ENCODE measurements at regions of chr16 and their contacts with region 1.

Region 1: GRCh38 chr16:1964506-1965395 is at the start of gene RPS2:
- DNase-seq: peak; percentile 94 to 99
- H3K4me3 ChIP-seq: peak within 1 kb of the TSS; percentile 83
- H3K27ac ChIP-seq: peak within 1 kb of the TSS; percentile 94
- H3K4me1 ChIP-seq: peaks cover 12% of the 10 kb centered on the region; the same call in 1 of the 2 replicates
- H3K27me3 ChIP-seq: no peaks in the 10 kb centered on the region
- CTCF ChIP-seq: no peak
- total RNA-seq, gene RPS2: 3,808 and 4,468 TPM in 2 replicates

Region 2: GRCh38 chr16:168424-168823 is 1796.3 kb before region 1 on chr16:
- CTCF ChIA-PET with region 1: no interaction called
- POLR2A ChIA-PET with region 1: no interaction called
- intact Hi-C with region 1: no loop called
- DNase-seq: no peak
- H3K4me3 ChIP-seq: no peak overlapping the region
- H3K27ac ChIP-seq: no peak overlapping the region
- H3K4me1 ChIP-seq: no peaks in the 10 kb centered on the region
- H3K27me3 ChIP-seq: peaks cover 10% of the 10 kb centered on the region; the same call in 1 of the 2 replicates
- CTCF ChIP-seq: no peak

Region 3: GRCh38 chr16:1752853-1753252 is 211.9 kb before region 1 on chr16:
- CTCF ChIA-PET with region 1: no interaction called
- POLR2A ChIA-PET with region 1: no interaction called
- intact Hi-C with region 1: no loop called
- DNase-seq: no peak
- H3K4me3 ChIP-seq: no peak overlapping the region
- H3K27ac ChIP-seq: no peak overlapping the region
- H3K4me1 ChIP-seq: peaks cover 3% of the 10 kb centered on the region; the same call in 1 of the 2 replicates
- H3K27me3 ChIP-seq: no peaks in the 10 kb centered on the region
- CTCF ChIP-seq: no peak

Region 4: GRCh38 chr16:1772736-1773584 is 191.8 kb before region 1 on chr16 and contains the starts of genes EME2 and MRPS34:
- CTCF ChIA-PET with region 1: no interaction called
- POLR2A ChIA-PET with region 1: no interaction called
- intact Hi-C with region 1: loop called (anchors 5 kb)
- DNase-seq: peak; percentile 69 to 93
- H3K4me3 ChIP-seq: peak within 1 kb of the TSS; percentile 77
- H3K27ac ChIP-seq: peak within 1 kb of the TSS; percentile 77
- H3K4me1 ChIP-seq: peaks cover 19% of the 10 kb centered on the region
- H3K27me3 ChIP-seq: no peaks in the 10 kb centered on the region
- CTCF ChIP-seq: peak; percentile 90
- total RNA-seq, gene EME2: 24.2 and 32.4 TPM in 2 replicates
- total RNA-seq, gene MRPS34: 201 and 247 TPM in 2 replicates

Region 5: GRCh38 chr16:1863681-1864460 is 100.9 kb before region 1 on chr16:
- CTCF ChIA-PET with region 1: no interaction called
- POLR2A ChIA-PET with region 1: interaction called, 30 read pairs
- intact Hi-C with region 1: no loop called
- DNase-seq: peak in 1 of 2 experiments; percentile 11
- H3K4me3 ChIP-seq: no peak overlapping the region
- H3K27ac ChIP-seq: no peak overlapping the region
- H3K4me1 ChIP-seq: 0 out of 2 replicates have a peak, but pooled peaks cover under 1% of the 10 kb centered on the region
- H3K27me3 ChIP-seq: peaks cover 2% of the 10 kb centered on the region; the same call in 1 of the 2 replicates
- CTCF ChIP-seq: peak; percentile 80

Region 6: GRCh38 chr16:1983544-1984346 is 19.0 kb after region 1 on chr16 and contains the start of gene GFER:
- CTCF ChIA-PET with region 1: no interaction called
- POLR2A ChIA-PET with region 1: interaction called, 10 read pairs
- intact Hi-C with region 1: no loop called
- DNase-seq: peak; percentile 73 to 98
- H3K4me3 ChIP-seq: peak within 1 kb of the TSS; percentile 93
- H3K27ac ChIP-seq: no peak within 1 kb of the TSS
- H3K4me1 ChIP-seq: peaks cover 67% of the 10 kb centered on the region
- H3K27me3 ChIP-seq: no peaks in the 10 kb centered on the region
- CTCF ChIP-seq: no peak; the same call in 1 of the 2 replicates
- total RNA-seq, gene GFER: 59.7 and 63.8 TPM in 2 replicates

Region 7: GRCh38 chr16:2371421-2371820 is 406.7 kb after region 1 on chr16:
- CTCF ChIA-PET with region 1: no interaction called
- POLR2A ChIA-PET with region 1: no interaction called
- intact Hi-C with region 1: no loop called
- DNase-seq: no peak
- H3K4me3 ChIP-seq: no peak overlapping the region
- H3K27ac ChIP-seq: no peak overlapping the region
- H3K4me1 ChIP-seq: peaks cover 7% of the 10 kb centered on the region; the same call in 1 of the 2 replicates
- H3K27me3 ChIP-seq: peaks cover 25% of the 10 kb centered on the region
- CTCF ChIP-seq: no peak

Region 8: DNA sequence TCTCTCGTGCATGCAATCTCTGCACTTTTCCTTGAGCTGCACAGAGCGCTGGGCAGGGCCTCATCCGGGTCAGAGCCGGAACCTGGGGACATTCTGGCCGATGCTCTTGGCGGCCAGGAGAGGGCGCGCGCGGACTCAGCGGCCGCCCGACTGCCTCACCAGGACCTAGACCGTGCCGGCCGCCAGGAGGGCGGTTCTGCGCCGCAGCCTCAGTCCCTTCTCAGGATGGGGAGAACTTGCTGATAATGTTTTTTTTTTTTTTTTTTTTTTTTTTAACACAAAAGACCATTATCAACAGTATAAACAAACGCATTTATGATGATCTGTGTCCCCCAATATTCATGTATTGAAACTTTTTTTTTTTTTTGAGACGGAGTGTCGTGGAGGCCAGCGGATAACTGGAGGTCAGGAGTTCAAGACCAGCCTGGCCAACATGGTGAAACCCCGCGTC is 910.2 kb after region 1 on chr16:
- CTCF ChIA-PET with region 1: no interaction called
- POLR2A ChIA-PET with region 1: interaction called, 10 read pairs
- intact Hi-C with region 1: no loop called
- DNase-seq: peak; percentile 57 to 66
- H3K4me3 ChIP-seq: no peak overlapping the region
- H3K27ac ChIP-seq: no peak overlapping the region
- H3K4me1 ChIP-seq: 0 out of 2 replicates have a peak, but pooled peaks cover 6% of the 10 kb centered on the region
- H3K27me3 ChIP-seq: no peaks in the 10 kb centered on the region
- CTCF ChIP-seq: peak; percentile 89

Measured in PC-9 (cell line).